MCF 10A (cell line): ENCODE measurements at regions of chr7 and their contacts with region 1.

Region 1: GRCh38 chr7:78020136-78020873 is 221.7 kb downstream of the PHTF2 start:
- DNase-seq: peak; percentile 78
- H3K4me3 Mint-ChIP-seq: peak overlapping the region; percentile 67
- H3K27ac Mint-ChIP-seq: no peak overlapping the region
- H3K4me1 Mint-ChIP-seq: peaks cover 5% of the 10 kb centered on the region
- H3K27me3 Mint-ChIP-seq: peaks cover 31% of the 10 kb centered on the region
- CTCF ChIP-seq: peak; percentile 71

Region 2: DNA sequence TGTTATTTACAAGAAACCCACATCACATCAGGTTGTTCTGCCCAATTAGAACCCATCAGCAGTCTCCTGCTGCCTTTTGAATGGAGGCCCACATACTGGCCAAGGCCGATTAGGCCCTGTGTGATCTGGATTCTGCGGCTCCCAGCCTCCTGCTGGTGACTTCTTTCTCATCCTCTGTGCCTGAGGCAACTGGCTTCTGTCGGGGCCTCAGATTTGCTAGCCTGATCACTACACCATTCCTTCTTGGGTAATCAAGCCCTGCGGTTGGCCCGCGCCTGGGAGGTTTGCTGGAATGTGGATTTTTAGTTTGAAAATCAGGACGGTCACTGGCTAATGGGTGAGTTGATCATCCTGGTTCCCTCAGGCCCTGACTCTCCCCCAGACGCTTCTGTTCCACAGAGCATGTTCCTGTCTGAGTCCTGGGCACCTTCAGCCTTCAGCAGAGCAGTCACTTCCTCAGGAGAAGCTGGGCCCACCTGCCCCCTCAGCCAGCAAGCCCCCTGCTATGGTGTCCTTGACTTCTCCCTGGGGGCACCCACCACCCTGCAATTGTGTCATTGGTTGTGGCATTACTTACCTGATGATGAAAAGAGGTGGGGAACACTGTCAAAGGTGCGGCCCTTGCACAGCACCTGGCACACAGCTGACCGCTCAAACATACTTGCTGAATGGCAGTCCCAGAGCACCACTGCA is 14.1 kb before region 1 on chr7:
- CTCF ChIA-PET with region 1: interaction called, 20 read pairs
- POLR2A ChIA-PET with region 1: no interaction called
- intact Hi-C with region 1: no loop called
- DNase-seq: no peak
- H3K4me3 Mint-ChIP-seq: no peak overlapping the region
- H3K27ac Mint-ChIP-seq: no peak overlapping the region
- H3K4me1 Mint-ChIP-seq: no peaks in the 10 kb centered on the region
- H3K27me3 Mint-ChIP-seq: peaks cover 4% of the 10 kb centered on the region
- CTCF ChIP-seq: no peak

Region 3: DNA sequence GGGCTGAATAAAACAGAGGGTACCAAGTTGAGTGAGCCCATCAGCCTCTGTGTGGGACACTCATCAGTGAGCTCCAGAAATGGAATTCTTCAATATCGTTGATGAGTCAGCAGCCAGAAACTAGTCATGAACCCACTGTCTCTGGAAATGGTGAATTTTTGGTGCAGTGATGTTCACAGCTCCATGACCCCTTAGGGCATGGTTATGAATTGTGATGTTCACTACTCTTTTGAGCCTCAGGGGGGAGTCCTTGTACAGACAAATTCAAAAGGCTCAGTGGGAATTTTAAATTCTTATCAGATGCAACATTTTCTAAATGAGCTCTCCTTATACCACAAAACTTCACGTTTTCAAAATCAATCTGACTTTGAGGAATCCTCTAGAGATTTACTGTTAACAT is 114.0 kb after region 1 on chr7:
- CTCF ChIA-PET with region 1: interaction called, 3 read pairs
- POLR2A ChIA-PET with region 1: no interaction called
- intact Hi-C with region 1: loop called (anchors 5 kb)
- DNase-seq: peak; percentile 44
- H3K4me3 Mint-ChIP-seq: no peak overlapping the region
- H3K27ac Mint-ChIP-seq: no peak overlapping the region
- H3K4me1 Mint-ChIP-seq: no peaks in the 10 kb centered on the region
- H3K27me3 Mint-ChIP-seq: peaks cover 68% of the 10 kb centered on the region
- CTCF ChIP-seq: peak; percentile 29

Region 4: DNA sequence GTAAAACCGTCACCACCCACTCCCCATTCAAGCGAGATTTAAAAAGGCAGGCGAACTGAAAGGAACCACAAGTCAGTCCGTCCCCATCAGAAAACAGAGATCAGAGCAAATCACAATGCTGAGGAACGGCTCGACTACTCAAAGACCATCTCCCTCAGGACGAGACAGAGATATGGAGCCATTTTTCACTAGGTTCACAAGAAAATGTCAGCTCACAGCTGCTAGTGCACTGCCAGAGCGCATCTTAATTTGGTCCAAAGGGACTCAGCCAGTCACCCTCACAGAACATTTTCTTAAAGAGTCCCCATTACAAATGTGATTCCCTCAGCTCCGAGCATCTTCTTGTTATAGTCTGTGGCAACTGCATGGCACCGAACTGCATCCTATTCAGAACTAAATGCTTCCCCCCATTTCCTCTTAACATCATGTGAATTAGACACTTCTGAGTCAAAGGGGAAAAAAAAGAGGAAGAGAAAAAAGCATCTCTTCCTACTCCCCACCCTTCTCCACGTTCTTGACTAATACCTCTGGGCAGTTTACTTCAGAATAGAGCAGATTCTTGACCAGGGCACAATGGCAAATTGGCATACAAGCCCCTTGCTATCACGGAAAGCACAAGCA is 749.3 kb after region 1 on chr7:
- CTCF ChIA-PET with region 1: interaction called, 10 read pairs
- POLR2A ChIA-PET with region 1: no interaction called
- intact Hi-C with region 1: no loop called
- DNase-seq: no peak
- H3K4me3 Mint-ChIP-seq: no peak overlapping the region
- H3K27ac Mint-ChIP-seq: no peak overlapping the region
- H3K4me1 Mint-ChIP-seq: no peaks in the 10 kb centered on the region
- H3K27me3 Mint-ChIP-seq: peaks cover 16% of the 10 kb centered on the region
- CTCF ChIP-seq: no peak